GM12878 (cell line): ENCODE measurements at regions of chr7 and their contacts with region 1.

Region 1: GRCh38 chr7:123231027-123232000 is 31.5 kb upstream of the SLC13A1 start:
- DNase-seq: no peak
- ATAC-seq: no peak
- H3K4me3 ChIP-seq: no peak overlapping the region
- H3K27ac ChIP-seq: no peak overlapping the region
- H3K4me1 ChIP-seq: no peaks in the 10 kb centered on the region
- H3K27me3 ChIP-seq: no peaks in the 10 kb centered on the region; a peak in 1 of 4 replicates
- CTCF ChIP-seq: no peak
- EP300 ChIP-seq: no peak
- POLR2A ChIP-seq: no peak
- RAD21 ChIP-seq: no peak

Region 2: GRCh38 chr7:123260428-123260960 is 29.2 kb after region 1 on chr7:
- CTCF ChIA-PET with region 1: no interaction called
- POLR2A ChIA-PET with region 1: no interaction called
- RAD21 ChIA-PET with region 1: no interaction called
- SMC1A ChIA-PET with region 1: no interaction called
- in situ Hi-C with region 1: no loop called
- intact Hi-C with region 1: loop called (anchors 2 kb)
- DNase-seq: no peak
- ATAC-seq: no peak
- H3K4me3 ChIP-seq: no peak overlapping the region
- H3K27ac ChIP-seq: no peak overlapping the region
- H3K4me1 ChIP-seq: no peaks in the 10 kb centered on the region
- H3K27me3 ChIP-seq: no peaks in the 10 kb centered on the region
- CTCF ChIP-seq: no peak
- EP300 ChIP-seq: no peak
- POLR2A ChIP-seq: no peak
- RAD21 ChIP-seq: no peak

Region 3: DNA sequence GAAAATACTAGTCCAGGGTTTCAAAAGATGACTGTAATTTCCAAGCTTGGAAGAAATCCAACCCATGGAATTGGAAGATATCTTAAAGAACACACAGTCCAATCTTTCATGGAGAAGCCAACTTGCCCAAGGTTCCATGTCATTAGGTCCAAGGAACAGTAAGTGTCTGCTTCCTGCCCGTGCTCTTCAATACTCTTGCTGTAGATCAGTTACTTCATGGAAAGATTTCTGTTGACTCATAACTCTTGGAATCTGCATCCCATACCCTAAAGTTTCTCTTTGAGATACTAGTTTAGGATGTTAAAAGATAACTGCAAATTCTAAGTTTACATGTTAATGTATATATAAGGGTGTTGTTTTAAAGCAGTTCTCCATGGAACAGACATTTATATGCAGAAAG is 96.3 kb after region 1 on chr7:
- CTCF ChIA-PET with region 1: no interaction called
- POLR2A ChIA-PET with region 1: no interaction called
- RAD21 ChIA-PET with region 1: no interaction called
- SMC1A ChIA-PET with region 1: no interaction called
- in situ Hi-C with region 1: no loop called
- intact Hi-C with region 1: no loop called
- DNase-seq: no peak
- ATAC-seq: no peak
- H3K4me3 ChIP-seq: no peak overlapping the region
- H3K27ac ChIP-seq: no peak overlapping the region
- H3K4me1 ChIP-seq: no peaks in the 10 kb centered on the region
- H3K27me3 ChIP-seq: no peaks in the 10 kb centered on the region
- CTCF ChIP-seq: no peak
- EP300 ChIP-seq: no peak
- POLR2A ChIP-seq: no peak
- RAD21 ChIP-seq: no peak